Posterior cingulate gyrus (tissue), 11 donors: ENCODE measurements at regions of chr5 and their contacts with region 1.

Region 1: DNA sequence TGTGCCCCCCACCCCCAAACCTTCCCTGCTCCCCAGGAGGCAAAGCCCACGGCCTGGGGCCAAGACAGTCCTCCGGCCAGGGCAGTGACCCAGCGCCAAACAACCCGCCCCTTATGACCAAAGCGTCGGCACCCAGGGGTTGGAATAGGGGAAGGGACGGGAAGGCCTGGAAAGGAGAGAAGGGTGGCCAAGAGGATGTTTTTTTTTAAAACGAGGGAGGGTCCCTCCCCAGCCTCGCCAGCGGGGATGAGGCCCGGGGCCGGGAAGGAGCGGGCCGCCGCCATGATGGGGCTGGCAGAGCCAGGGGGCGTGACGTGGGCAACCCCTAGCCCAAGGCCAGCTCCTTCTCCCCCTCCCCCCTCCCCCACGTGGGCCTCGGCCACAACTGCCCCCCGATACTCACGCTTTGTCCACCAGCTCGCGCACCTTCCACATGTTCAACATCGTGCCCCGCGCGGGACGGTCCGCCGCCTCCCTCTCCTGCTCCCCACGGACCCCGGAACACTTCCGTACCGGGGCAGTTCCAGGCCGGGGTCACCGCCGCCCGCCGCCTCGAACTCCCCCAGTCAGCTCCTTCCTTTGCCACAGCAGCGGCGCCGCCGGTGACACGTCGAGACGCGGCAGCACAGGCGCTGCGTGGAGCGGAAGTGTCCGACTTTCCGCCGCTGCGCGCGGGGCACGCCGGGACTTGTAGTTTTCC is at the start of gene CLINT1:
- DNase-seq: peak; percentile 89 to 99 (median 93)

Region 2: DNA sequence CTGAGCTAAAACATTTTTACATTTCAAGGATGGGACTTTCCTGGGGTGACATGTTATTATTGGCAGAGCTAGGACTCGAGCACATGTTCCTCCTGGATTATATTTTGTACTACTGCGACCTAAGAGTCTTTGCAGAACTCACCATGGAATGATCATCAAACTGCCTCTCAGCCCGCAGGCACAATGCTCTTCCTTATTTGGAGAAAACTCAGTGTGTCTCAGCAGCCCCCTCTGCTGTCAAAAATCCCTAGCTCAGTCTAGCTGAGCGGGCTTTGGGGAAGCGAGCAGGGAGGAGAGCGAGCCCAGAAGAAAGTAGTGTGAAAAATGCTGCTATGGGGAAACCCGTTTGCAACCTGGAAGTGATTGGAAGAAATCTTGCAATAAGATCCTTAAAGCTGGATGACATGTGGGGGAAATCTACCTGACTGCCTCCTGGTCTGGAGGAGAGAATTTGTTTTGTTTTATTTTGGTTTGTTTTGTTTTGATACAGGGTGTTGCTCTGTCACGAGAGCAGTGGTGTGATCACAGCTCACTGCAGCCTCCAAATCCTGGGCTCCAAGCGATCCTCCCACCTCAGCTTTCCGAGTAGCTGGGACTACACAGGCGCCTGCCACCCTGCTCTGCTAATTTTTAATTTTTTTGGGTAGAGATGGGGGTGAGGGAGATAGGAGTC is 90.2 kb after region 1 on chr5:
- intact Hi-C with region 1: loop called (anchors 5 kb)
- DNase-seq: peak; percentile 68 to 96 (median 83)

Region 3: DNA sequence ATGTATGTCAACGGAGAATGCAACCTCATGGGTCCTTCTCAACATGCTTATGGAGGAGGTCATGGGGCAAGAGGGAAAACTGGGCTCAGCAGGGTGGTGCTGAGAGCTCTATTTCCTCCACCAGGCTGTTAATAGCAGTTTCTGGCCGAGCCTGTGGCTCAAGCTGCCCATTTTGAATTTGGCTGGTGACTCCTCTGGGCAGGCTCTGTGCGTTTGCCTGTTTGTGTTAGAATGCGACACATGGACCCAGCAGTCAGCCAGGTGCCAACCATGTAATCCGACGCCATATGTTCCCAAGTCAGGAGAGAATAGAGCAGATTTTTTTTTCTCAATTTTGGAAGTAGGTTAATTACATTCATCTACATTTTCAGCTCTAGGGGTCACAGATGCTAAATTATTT is 388.0 kb after region 1 on chr5:
- intact Hi-C with region 1: no loop called
- DNase-seq: peak in 5 of 10 donors; percentile 6 to 83 (median 10)